ENCODE measurements at regions of chr17 and their contacts with region 1.

Region 1: DNA sequence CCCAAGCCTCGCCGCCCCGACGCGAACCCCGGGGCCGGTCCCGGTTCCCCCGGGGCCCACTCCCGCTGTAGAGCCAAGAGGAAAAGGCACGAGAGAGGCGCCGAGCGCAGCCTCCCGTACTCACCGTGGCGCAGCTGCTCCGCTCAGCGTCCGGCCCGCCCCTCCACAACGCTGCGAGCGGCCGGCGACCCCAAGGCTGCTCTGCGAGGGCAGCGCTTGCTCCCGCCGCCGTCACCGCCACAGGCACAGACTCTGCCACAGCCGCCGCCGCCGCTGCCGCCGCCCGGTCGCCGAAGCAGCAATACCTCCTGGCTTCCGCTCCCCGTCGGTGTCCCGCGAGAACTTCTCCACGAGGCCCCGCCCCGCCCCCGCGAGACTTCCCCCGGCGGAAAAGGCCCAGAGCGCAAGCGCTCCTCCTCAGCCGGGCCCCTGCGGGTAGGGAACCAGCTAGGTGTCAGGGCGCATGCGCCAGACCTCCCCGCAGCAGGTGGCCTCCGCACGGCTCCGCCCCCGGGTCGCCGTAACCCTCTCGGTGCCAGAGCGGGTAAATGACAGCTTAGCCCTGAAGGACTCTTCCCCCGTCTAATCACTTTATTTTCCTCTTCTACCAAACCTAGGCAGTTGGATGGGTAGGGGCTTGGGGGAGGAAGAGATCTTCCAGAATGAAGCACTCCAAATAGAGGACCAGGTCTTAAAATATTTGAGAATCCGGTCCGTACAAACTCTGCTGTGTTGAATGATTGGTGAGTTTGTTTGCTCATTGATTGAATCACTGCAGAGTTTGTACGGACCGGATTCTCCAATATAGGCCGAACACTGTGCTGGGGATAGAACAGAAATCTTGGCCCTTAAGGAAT is at the start of gene GRB2:
- DNase-seq: peak; percentile 99 to 100 (median 99)
- ATAC-seq: peak; percentile 83
- H3K4me3 ChIP-seq: peak within 1 kb of the TSS; percentile 58 to 100
- H3K4me3 Mint-ChIP-seq: peak within 1 kb of the TSS; percentile 98
- H3K27ac ChIP-seq: peak within 1 kb of the TSS; percentile 77 to 86
- H3K27ac Mint-ChIP-seq: peak within 1 kb of the TSS; percentile 95
- H3K4me1 ChIP-seq: peaks cover 37% of the 10 kb centered on the region
- H3K4me1 Mint-ChIP-seq: peaks cover 47% of the 10 kb centered on the region
- H3K27me3 ChIP-seq: no peaks in the 10 kb centered on the region
- H3K27me3 Mint-ChIP-seq: no peaks in the 10 kb centered on the region
- CTCF ChIP-seq: no peak
- total RNA-seq, gene GRB2: 96.2 to 99.4 TPM

Region 2: DNA sequence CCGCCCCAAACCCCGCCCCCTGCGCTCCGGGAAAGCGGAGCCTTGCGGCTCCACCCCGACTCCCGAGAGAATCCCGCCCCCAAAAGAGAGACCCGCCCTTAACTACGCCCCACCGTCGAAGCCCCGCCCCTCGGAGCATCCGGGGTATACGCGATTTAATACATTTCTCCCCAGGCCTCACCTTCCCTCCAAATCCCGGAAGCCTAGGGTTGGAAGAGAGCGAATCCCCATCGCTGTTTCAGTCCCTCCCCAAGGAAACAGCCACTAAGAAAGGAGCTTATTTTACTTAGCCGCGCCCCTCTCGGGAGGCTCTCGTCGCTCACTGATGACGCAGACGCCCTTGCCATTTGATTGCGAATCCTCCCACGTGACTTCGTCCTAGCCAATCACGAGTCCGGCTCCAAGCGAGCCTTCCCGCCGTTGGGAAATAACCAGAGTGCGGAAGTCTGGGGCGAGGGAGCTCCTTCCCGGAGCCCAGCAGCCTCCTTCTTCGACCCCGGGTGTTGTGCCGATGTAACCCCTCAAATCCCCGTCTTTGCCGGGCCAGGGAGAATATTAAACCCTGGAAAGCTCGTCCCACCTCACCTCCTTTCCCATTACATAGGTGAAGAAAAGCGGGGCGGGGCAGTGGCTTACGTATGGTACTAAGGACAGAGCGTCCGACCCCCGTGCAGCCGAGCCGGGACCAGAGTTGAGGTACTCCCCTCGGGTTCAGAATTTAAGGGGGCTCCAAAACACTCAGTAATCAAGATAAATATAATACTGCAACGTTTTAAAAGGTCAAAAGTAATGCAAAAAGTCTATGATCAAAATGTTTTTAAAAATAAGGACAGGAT is 532.3 kb before region 1 on chr17:
- CTCF ChIA-PET with region 1: no interaction called
- POLR2A ChIA-PET with region 1: no interaction called
- intact Hi-C with region 1: loop called in 1 of 2 experiments (anchors 10 kb)
- DNase-seq: peak; percentile 98 to 100 (median 99)
- ATAC-seq: peak; percentile 93
- H3K4me3 ChIP-seq: peak overlapping the region; percentile 75 to 92
- H3K4me3 Mint-ChIP-seq: peak overlapping the region; percentile 96
- H3K27ac ChIP-seq: peak overlapping the region; percentile 78 to 99
- H3K27ac Mint-ChIP-seq: peak overlapping the region; percentile 99
- H3K4me1 ChIP-seq: peaks cover 17% of the 10 kb centered on the region
- H3K4me1 Mint-ChIP-seq: peaks cover 23% of the 10 kb centered on the region
- H3K27me3 ChIP-seq: no peaks in the 10 kb centered on the region
- H3K27me3 Mint-ChIP-seq: no peaks in the 10 kb centered on the region
- CTCF ChIP-seq: no peak

Region 3: GRCh38 chr17:75261336-75262111 is 144.1 kb before region 1 on chr17 and contains the starts of genes GGA3 and MRPS7:
- CTCF ChIA-PET with region 1: no interaction called
- POLR2A ChIA-PET with region 1: interaction called, 7 read pairs
- intact Hi-C with region 1: loop called (anchors 1 kb)
- DNase-seq: peak; percentile 93 to 98 (median 96)
- ATAC-seq: peak; percentile 94
- H3K4me3 ChIP-seq: peak within 1 kb of the TSS; percentile 89 to 97
- H3K4me3 Mint-ChIP-seq: peak within 1 kb of the TSS; percentile 99
- H3K27ac ChIP-seq: peak within 1 kb of the TSS; percentile 98 to 100
- H3K27ac Mint-ChIP-seq: peak within 1 kb of the TSS; percentile 100
- H3K4me1 ChIP-seq: peaks cover 27% of the 10 kb centered on the region
- H3K4me1 Mint-ChIP-seq: peaks cover 47% of the 10 kb centered on the region
- H3K27me3 ChIP-seq: no peaks in the 10 kb centered on the region
- H3K27me3 Mint-ChIP-seq: no peaks in the 10 kb centered on the region
- CTCF ChIP-seq: no peak
- total RNA-seq, gene GGA3: 103 to 107 TPM
- total RNA-seq, gene MRPS7: 42.0 to 43.9 TPM

Region 4: DNA sequence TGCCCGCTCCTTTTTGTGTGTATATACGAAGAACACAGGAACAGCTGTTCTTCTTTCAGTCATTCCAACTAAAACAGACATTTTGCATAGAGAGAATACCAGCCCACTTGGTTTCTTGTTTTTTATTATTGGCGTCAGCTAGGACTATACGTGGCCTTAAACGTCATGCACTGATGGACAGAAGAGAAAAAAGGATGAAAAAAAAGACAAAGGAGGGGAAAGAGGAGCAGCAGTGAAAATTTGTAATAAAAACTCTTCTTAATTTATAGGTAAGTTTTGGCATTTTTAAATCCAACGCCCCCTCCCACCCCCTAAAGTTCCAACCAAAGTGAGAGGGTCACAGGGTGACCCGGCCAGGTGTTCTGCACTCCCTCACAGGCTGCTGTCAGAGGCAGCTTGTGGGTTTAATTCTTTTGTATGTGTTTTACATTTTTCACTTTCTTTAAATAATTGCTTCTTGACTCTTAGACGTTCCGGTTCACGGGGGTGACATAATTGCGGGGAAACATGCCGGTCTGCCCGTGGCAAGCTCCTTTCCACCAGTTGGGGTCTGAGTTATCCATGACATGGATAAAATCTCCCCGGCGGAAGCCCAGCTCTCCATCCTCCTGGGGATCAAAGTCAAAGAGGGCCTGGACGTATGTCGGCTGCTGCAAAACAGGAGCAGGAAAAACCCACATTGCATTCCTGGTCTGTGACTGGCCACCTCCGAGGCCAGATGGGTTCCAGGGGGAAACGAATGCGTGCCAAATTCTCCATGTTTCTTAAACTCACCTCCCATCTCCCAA is 85.5 kb before region 1 on chr17:
- CTCF ChIA-PET with region 1: interaction called, 208 read pairs
- POLR2A ChIA-PET with region 1: interaction called, 9 read pairs
- intact Hi-C with region 1: loop called (anchors 1 kb)
- DNase-seq: no peak
- ATAC-seq: no peak
- H3K4me3 ChIP-seq: no peak overlapping the region
- H3K4me3 Mint-ChIP-seq: no peak overlapping the region
- H3K27ac ChIP-seq: no peak overlapping the region
- H3K27ac Mint-ChIP-seq: no peak overlapping the region
- H3K4me1 ChIP-seq: peaks cover 5% of the 10 kb centered on the region
- H3K4me1 Mint-ChIP-seq: peaks cover 6% of the 10 kb centered on the region
- H3K27me3 ChIP-seq: no peaks in the 10 kb centered on the region
- H3K27me3 Mint-ChIP-seq: no peaks in the 10 kb centered on the region
- CTCF ChIP-seq: no peak

Region 5: GRCh38 chr17:75515496-75516254 is 110.1 kb after region 1 on chr17 and contains the start of gene CASKIN2:
- CTCF ChIA-PET with region 1: interaction called, 4 read pairs
- POLR2A ChIA-PET with region 1: interaction called, 11 read pairs
- intact Hi-C with region 1: loop called (anchors 1 kb)
- DNase-seq: peak; percentile 56 to 89 (median 80)
- ATAC-seq: peak; percentile 59
- H3K4me3 ChIP-seq: peak within 1 kb of the TSS; percentile 79 to 97
- H3K4me3 Mint-ChIP-seq: peak within 1 kb of the TSS; percentile 77
- H3K27ac ChIP-seq: peak within 1 kb of the TSS in 1 of 2 experiments; percentile 32
- H3K27ac Mint-ChIP-seq: no peak within 1 kb of the TSS
- H3K4me1 ChIP-seq: peaks cover 35% of the 10 kb centered on the region
- H3K4me1 Mint-ChIP-seq: peaks cover 26% of the 10 kb centered on the region
- H3K27me3 ChIP-seq: no peaks in the 10 kb centered on the region
- H3K27me3 Mint-ChIP-seq: no peaks in the 10 kb centered on the region
- CTCF ChIP-seq: peak; percentile 99
- total RNA-seq, gene CASKIN2: 0.64 to 0.98 TPM

Region 6: GRCh38 chr17:75557075-75557882 is 151.7 kb after region 1 on chr17:
- CTCF ChIA-PET with region 1: no interaction called
- POLR2A ChIA-PET with region 1: no interaction called
- intact Hi-C with region 1: no loop called
- DNase-seq: no peak
- ATAC-seq: no peak
- H3K4me3 ChIP-seq: no peak overlapping the region
- H3K4me3 Mint-ChIP-seq: no peak overlapping the region
- H3K27ac ChIP-seq: no peak overlapping the region
- H3K27ac Mint-ChIP-seq: no peak overlapping the region
- H3K4me1 ChIP-seq: no peaks in the 10 kb centered on the region
- H3K4me1 Mint-ChIP-seq: no peaks in the 10 kb centered on the region
- H3K27me3 ChIP-seq: no peaks in the 10 kb centered on the region
- H3K27me3 Mint-ChIP-seq: no peaks in the 10 kb centered on the region
- CTCF ChIP-seq: no peak

Region 7: GRCh38 chr17:75667021-75667790 is 261.6 kb after region 1 on chr17 and contains the starts of genes RECQL5 and SAP30BP:
- CTCF ChIA-PET with region 1: no interaction called
- POLR2A ChIA-PET with region 1: no interaction called
- intact Hi-C with region 1: loop called in 1 of 2 experiments (anchors 1 kb)
- DNase-seq: peak; percentile 95 to 99 (median 98)
- ATAC-seq: peak; percentile 100
- H3K4me3 ChIP-seq: peak within 1 kb of the TSS; percentile 78 to 85
- H3K4me3 Mint-ChIP-seq: peak within 1 kb of the TSS; percentile 58
- H3K27ac ChIP-seq: peak within 1 kb of the TSS; percentile 88 to 96
- H3K27ac Mint-ChIP-seq: no peak within 1 kb of the TSS
- H3K4me1 ChIP-seq: peaks cover 18% of the 10 kb centered on the region
- H3K4me1 Mint-ChIP-seq: peaks cover 33% of the 10 kb centered on the region
- H3K27me3 ChIP-seq: no peaks in the 10 kb centered on the region
- H3K27me3 Mint-ChIP-seq: no peaks in the 10 kb centered on the region
- CTCF ChIP-seq: no peak
- total RNA-seq, gene RECQL5: 11.2 to 13.2 TPM
- total RNA-seq, gene SAP30BP: 303 to 305 TPM

Measured in CD8-positive, alpha-beta T cell (primary cell).